HCT116 (cell line): ENCODE measurements at regions of chr3 and their contacts with region 1.

Region 1: GRCh38 chr3:19543212-19543841 is 390.7 kb downstream of the EFHB start:
- DNase-seq: peak; percentile 1
- ATAC-seq: peak; percentile 60
- H3K4me3 ChIP-seq: no peak overlapping the region
- H3K27ac ChIP-seq: no peak overlapping the region
- H3K4me1 ChIP-seq: no peaks in the 10 kb centered on the region
- H3K27me3 ChIP-seq: no peaks in the 10 kb centered on the region
- CTCF ChIP-seq: peak in 2 of 3 experiments; percentile 25 to 39; a peak in 3 of 6 replicates
- POLR2A ChIP-seq: no peak
- RAD21 ChIP-seq: peak; percentile 37

Region 2: DNA sequence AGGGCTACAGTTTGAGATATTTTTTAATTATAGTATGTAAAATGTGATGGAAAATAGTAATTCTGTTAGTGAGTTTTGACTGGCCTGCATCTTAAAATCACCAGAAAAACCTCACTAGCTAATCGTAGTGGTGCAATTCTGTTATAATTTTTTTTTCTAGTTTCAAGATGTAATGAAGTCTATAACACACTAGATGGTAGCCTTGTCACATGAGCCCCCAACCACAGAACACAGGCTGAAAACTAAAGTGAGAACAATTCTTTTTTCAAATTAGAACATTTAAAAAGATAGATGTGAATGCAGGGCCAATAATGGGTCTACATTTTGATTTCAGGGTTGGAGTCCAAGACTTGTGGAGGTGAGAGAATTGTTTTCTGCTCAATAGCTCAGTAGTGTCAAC is 478.3 kb before region 1 on chr3:
- CTCF ChIA-PET with region 1: no interaction called
- POLR2A ChIA-PET with region 1: no interaction called
- RAD21 ChIA-PET with region 1: no interaction called
- intact Hi-C with region 1: loop called (anchors 10 kb)
- DNase-seq: no peak
- ATAC-seq: no peak
- H3K4me3 ChIP-seq: no peak overlapping the region
- H3K27ac ChIP-seq: no peak overlapping the region
- H3K4me1 ChIP-seq: no peaks in the 10 kb centered on the region
- H3K27me3 ChIP-seq: no peaks in the 10 kb centered on the region
- CTCF ChIP-seq: no peak
- POLR2A ChIP-seq: no peak
- RAD21 ChIP-seq: peak; percentile 48

Region 3: GRCh38 chr3:20302766-20303165 is 759.4 kb after region 1 on chr3:
- CTCF ChIA-PET with region 1: no interaction called
- POLR2A ChIA-PET with region 1: no interaction called
- RAD21 ChIA-PET with region 1: no interaction called
- intact Hi-C with region 1: no loop called
- DNase-seq: no peak
- ATAC-seq: no peak
- H3K4me3 ChIP-seq: no peak overlapping the region
- H3K27ac ChIP-seq: no peak overlapping the region
- H3K4me1 ChIP-seq: no peaks in the 10 kb centered on the region
- H3K27me3 ChIP-seq: no peaks in the 10 kb centered on the region
- CTCF ChIP-seq: no peak
- POLR2A ChIP-seq: no peak
- RAD21 ChIP-seq: no peak